ENCODE measurements at regions of chr14 and their contacts with region 1.

Region 1: GRCh38 chr14:102020058-102020971 is 55.9 kb downstream of the DYNC1H1 start:
- DNase-seq: peak; percentile 38
- H3K4me3 Mint-ChIP-seq: peak overlapping the region; percentile 32
- H3K27ac Mint-ChIP-seq: peak overlapping the region; percentile 76
- H3K4me1 Mint-ChIP-seq: peaks cover 20% of the 10 kb centered on the region
- H3K27me3 Mint-ChIP-seq: no peaks in the 10 kb centered on the region

Region 2: GRCh38 chr14:101817501-101818001 is 202.8 kb before region 1 on chr14:
- intact Hi-C with region 1: loop called (anchors 1 kb)
- DNase-seq: no peak
- H3K4me3 Mint-ChIP-seq: peak overlapping the region; percentile 64
- H3K27ac Mint-ChIP-seq: peak overlapping the region; percentile 90
- H3K4me1 Mint-ChIP-seq: peaks cover 91% of the 10 kb centered on the region
- H3K27me3 Mint-ChIP-seq: no peaks in the 10 kb centered on the region

Region 3: GRCh38 chr14:101947906-101948665 is 72.2 kb before region 1 on chr14:
- intact Hi-C with region 1: no loop called
- DNase-seq: peak; percentile 100
- H3K4me3 Mint-ChIP-seq: peak overlapping the region; percentile 97
- H3K27ac Mint-ChIP-seq: peak overlapping the region; percentile 97
- H3K4me1 Mint-ChIP-seq: peaks cover 12% of the 10 kb centered on the region
- H3K27me3 Mint-ChIP-seq: peaks cover 15% of the 10 kb centered on the region

Region 4: DNA sequence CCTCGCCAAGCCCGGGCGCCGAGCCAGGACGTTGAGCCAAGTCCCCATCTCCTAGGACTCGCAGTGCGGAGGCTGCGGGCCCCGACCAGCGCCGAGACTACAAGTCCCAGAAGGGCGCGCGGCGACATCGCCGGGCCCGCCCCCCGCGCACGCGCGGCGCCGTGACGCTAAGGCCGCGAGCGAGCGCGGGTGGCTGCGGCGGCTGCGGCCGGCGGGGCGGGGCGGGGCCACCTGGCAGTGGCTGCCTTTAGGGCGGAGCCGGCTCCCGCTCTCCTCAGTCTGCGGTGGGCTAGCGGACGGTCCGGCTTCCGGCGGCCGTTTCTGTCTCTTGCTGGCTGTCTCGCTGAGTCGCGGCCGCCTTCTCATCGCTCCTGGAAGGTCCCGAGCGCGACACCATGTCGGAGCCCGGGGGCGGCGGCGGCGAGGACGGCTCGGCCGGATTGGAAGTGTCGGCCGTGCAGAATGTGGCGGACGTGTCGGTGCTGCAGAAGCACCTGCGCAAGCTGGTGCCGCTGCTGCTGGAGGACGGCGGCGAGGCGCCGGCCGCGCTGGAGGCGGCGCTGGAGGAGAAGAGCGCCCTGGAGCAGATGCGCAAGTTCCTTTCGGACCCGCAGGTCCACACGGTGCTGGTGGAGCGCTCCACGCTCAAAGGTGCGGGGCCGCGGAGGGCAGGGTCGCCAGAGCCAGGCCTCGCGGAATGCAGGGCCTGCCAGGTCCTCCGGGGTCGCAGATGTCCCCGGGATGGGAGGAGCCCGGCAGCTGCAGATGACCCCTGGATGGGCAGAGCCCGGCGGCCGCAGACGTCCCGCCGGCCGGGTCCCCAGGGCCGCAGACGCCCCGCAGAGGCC is 55.8 kb before region 1 on chr14 and contains the start of gene DYNC1H1:
- intact Hi-C with region 1: loop called (anchors 1 kb)
- DNase-seq: peak; percentile 89
- H3K4me3 Mint-ChIP-seq: peak within 1 kb of the TSS; percentile 90
- H3K27ac Mint-ChIP-seq: peak within 1 kb of the TSS; percentile 93
- H3K4me1 Mint-ChIP-seq: peaks cover 38% of the 10 kb centered on the region
- H3K27me3 Mint-ChIP-seq: peaks cover 2% of the 10 kb centered on the region
- total RNA-seq, gene DYNC1H1: 241 and 254 TPM in 2 replicates

Region 5: GRCh38 chr14:102096214-102097114 is 76.1 kb after region 1 on chr14:
- intact Hi-C with region 1: loop called (anchors 1 kb)
- DNase-seq: peak; percentile 31
- H3K4me3 Mint-ChIP-seq: no peak overlapping the region
- H3K27ac Mint-ChIP-seq: no peak overlapping the region
- H3K4me1 Mint-ChIP-seq: peaks cover 24% of the 10 kb centered on the region
- H3K27me3 Mint-ChIP-seq: no peaks in the 10 kb centered on the region

Measured in activated T-helper 1 cell treated with anti-CD3 and anti-CD28 coated beads, Interleukin-12 subunit alpha, Interleukin-12 subunit beta, Interleukin-2, Interleukin-4 antibody, amounts not matched to agents 30 ng/mL and 10 ng/mL and 1 ng/mL, durations not matched to agents 14 hours and 24 hours and 36 hours (primary cell).